ENCODE measurements at regions of chr10 and their contacts with region 1.

Region 1: DNA sequence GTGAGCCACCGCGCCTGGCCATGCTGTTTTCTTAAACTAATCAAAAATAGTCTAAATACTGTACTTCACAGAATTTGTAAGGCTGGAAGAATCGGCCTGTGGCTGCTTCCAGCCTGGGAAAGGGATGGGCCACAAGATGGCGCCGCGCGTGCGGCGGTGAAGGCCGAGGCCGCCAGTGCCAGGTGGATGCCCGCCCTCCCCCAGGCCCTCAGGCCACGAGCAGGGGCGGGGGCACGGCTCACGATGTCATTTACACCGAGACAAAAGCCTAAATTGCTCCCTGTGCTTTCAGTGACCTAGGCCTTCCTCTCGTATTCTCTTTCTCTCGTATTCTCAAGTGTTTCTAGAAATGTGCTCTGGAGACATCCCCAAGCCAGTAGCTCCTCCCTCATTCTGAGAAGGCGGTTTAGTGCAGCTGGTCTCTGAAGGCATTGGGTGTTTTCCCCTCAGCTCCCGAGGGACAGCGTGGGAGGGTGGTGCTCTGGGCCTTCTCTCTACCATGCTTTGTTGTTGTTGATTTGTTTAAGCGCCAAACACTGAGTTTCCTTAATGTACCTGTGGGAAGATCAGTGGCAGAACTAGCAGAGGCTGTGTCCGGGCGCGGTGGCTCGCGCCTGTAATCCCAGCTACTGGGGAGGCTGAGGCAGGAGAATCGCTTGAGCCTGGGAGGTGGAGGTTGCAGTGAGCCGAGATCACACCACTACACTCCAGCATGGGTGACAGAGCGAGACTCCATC is 68.4 kb downstream of the CDC123 start:
- DNase-seq: peak; percentile 59 to 73 (median 63)
- H3K4me3 ChIP-seq: peak overlapping the region in 1 of 2 donors; percentile 27
- H3K4me3 Mint-ChIP-seq: peak overlapping the region; percentile 41 to 84 (median 77)
- H3K27ac ChIP-seq: no peak overlapping the region
- H3K27ac Mint-ChIP-seq: peak overlapping the region in 5 of 7 donors; percentile 2 to 82 (median 78)
- H3K4me1 ChIP-seq: peaks cover 4% of the 10 kb centered on the region
- H3K4me1 Mint-ChIP-seq: peaks cover 7 to 18% (median 13%) of the 10 kb centered on the region in 4 donors
- H3K27me3 ChIP-seq: no peaks in the 10 kb centered on the region
- H3K27me3 Mint-ChIP-seq: no peaks in the 10 kb centered on the region

Region 2: GRCh38 chr10:12051241-12051640 is 213.1 kb before region 1 on chr10:
- CTCF ChIA-PET with region 1: no interaction called
- POLR2A ChIA-PET with region 1: no interaction called
- intact Hi-C with region 1: no loop called
- DNase-seq: no peak
- H3K4me3 ChIP-seq: no peak overlapping the region
- H3K4me3 Mint-ChIP-seq: no peak overlapping the region
- H3K27ac ChIP-seq: no peak overlapping the region
- H3K27ac Mint-ChIP-seq: no peak overlapping the region
- H3K4me1 ChIP-seq: no peaks in the 10 kb centered on the region
- H3K4me1 Mint-ChIP-seq: peaks cover 2 to 6% (median 4%) of the 10 kb centered on the region in 4 donors
- H3K27me3 ChIP-seq: no peaks in the 10 kb centered on the region
- H3K27me3 Mint-ChIP-seq: peaks cover 0 to 1% of the 10 kb centered on the region in 2 donors

Region 3: DNA sequence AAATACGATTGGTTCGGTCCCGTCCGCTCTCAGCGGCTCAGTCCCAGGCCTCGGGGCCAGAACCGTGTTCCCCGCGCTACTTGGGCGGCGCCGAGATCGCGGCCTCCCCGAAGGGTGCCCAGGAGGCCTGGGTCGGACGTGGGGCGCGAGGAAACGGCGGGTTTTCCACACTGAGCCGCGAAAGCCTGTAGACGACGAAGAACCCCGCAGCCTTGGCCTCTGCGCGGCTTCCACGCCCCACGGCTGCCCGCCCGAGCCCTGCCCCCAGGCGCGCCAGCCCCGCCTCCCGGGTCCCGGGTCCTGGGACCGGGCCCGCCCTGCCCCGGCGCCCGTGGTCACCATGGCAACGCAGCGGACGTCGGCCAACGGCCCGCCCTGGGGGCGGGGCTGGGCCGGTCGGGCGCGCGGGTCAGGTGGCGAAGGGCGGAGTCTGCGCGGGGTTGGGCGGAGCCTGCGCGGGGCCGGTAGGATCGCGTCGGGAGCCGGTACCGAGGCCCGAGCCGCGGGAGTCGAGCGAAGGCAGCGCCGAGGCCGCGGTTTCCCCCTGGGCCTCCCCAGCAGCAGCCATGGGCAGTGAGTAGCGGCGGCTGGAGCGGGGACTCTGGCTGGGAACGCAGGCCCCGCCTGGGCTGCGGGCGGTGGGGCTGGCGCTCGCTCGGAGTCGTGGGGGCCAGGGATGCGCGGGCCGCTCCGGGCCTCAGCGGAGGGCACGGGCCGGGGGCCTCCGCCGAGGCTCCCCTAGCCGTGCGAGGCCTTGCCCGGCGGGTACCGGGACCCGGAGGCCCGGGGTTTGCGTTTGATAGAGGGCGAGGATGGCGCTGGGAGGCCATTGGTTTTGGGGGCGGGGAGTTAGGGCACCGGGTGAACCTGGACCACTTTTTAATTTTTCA is 134.9 kb before region 1 on chr10 and contains the start of gene SEC61A2:
- CTCF ChIA-PET with region 1: no interaction called
- POLR2A ChIA-PET with region 1: no interaction called
- intact Hi-C with region 1: no loop called
- DNase-seq: peak; percentile 93 to 99 (median 97)
- H3K4me3 ChIP-seq: peak within 1 kb of the TSS; percentile 55 to 79
- H3K4me3 Mint-ChIP-seq: peak within 1 kb of the TSS; percentile 88 to 93 (median 91)
- H3K27ac ChIP-seq: peak within 1 kb of the TSS; percentile 72
- H3K27ac Mint-ChIP-seq: peak within 1 kb of the TSS; percentile 78 to 96 (median 93)
- H3K4me1 ChIP-seq: peaks cover 20% of the 10 kb centered on the region
- H3K4me1 Mint-ChIP-seq: peaks cover 11 to 33% (median 22%) of the 10 kb centered on the region in 4 donors
- H3K27me3 ChIP-seq: no peaks in the 10 kb centered on the region
- H3K27me3 Mint-ChIP-seq: no peaks in the 10 kb centered on the region
- total RNA-seq, gene SEC61A2: 12.2 to 13.4 TPM

Region 4: DNA sequence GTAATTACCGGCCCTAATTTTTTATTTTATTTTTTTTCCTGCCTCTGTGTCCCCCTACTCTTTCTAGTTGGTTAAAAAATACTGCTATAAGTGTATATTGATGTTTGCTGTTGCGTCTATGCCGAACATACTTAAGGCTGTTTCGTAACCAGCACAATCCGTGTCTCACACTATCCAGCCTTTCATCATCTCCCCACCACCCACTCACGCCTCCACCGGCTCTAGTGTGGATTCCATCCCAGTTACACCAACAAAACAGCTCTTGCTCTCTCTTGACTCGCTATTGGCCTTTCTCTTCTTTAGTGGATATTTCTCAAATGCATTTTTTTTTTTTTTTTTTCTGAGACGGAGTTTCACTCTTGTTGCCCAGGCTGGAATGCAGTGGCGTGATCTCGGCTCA is 14.9 kb after region 1 on chr10:
- CTCF ChIA-PET with region 1: interaction called, 10 read pairs
- POLR2A ChIA-PET with region 1: no interaction called
- intact Hi-C with region 1: no loop called
- DNase-seq: no peak
- H3K4me3 ChIP-seq: no peak overlapping the region
- H3K4me3 Mint-ChIP-seq: no peak overlapping the region
- H3K27ac ChIP-seq: no peak overlapping the region
- H3K27ac Mint-ChIP-seq: no peak overlapping the region
- H3K4me1 ChIP-seq: no peaks in the 10 kb centered on the region
- H3K4me1 Mint-ChIP-seq: peaks cover 0 to 3% (median under 1%) of the 10 kb centered on the region in 4 donors
- H3K27me3 ChIP-seq: no peaks in the 10 kb centered on the region
- H3K27me3 Mint-ChIP-seq: peaks cover 0 to 1% of the 10 kb centered on the region in 2 donors

Region 5: GRCh38 chr10:12484941-12485805 is 220.8 kb after region 1 on chr10:
- CTCF ChIA-PET with region 1: interaction called, 48 read pairs
- POLR2A ChIA-PET with region 1: no interaction called
- intact Hi-C with region 1: loop called (anchors 1 kb)
- DNase-seq: peak in 4 of 5 donors; percentile 11 to 22 (median 14)
- H3K4me3 ChIP-seq: no peak overlapping the region
- H3K4me3 Mint-ChIP-seq: peak overlapping the region in 4 of 8 donors; percentile 2 to 51 (median 48)
- H3K27ac ChIP-seq: no peak overlapping the region
- H3K27ac Mint-ChIP-seq: peak overlapping the region in 6 of 7 donors; percentile 25 to 78 (median 64)
- H3K4me1 ChIP-seq: peaks cover 13% of the 10 kb centered on the region
- H3K4me1 Mint-ChIP-seq: peaks cover 20 to 37% (median 27%) of the 10 kb centered on the region in 4 donors
- H3K27me3 ChIP-seq: no peaks in the 10 kb centered on the region
- H3K27me3 Mint-ChIP-seq: no peaks in the 10 kb centered on the region

Measured in CD4-positive, alpha-beta memory T cell (primary cell).